ENCODE measurements at regions of chr14 and their contacts with region 1.

Region 1: GRCh38 chr14:93655078-93655750 is 133.1 kb downstream of the PRIMA1 start:
- DNase-seq: no peak
- H3K4me3 ChIP-seq: no peak overlapping the region
- CTCF ChIP-seq: no peak
- POLR2A ChIP-seq: no peak

Region 2: DNA sequence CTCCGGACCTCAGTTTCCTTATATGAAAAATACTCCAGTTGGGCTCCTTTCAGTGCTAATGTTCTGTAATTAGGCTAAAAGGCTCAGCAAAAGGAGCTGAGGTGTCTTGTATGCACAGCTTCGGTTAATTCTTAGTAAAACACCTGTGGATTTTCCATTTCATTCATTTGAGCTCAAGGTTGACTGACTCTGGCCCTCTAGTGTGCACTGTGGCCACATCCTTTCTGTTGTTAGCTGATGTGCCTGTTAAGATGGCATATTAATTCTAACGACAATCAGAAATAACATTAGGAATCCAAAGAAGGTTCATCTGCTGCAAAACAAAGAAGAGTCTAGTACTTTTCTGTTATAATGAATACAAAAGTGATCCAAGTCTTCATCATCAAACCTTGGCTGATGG is 178.9 kb before region 1 on chr14:
- intact Hi-C with region 1: no loop called
- DNase-seq: no peak
- H3K4me3 ChIP-seq: no peak overlapping the region
- CTCF ChIP-seq: no peak
- POLR2A ChIP-seq: no peak

Region 3: GRCh38 chr14:93906341-93907329 is 251.4 kb after region 1 on chr14:
- intact Hi-C with region 1: loop called (anchors 5 kb)
- DNase-seq: peak in 1 of 2 donors; percentile 24
- H3K4me3 ChIP-seq: no peak overlapping the region
- CTCF ChIP-seq: no peak
- POLR2A ChIP-seq: no peak

Measured in lower leg skin (tissue), 4 donors.